ENCODE measurements at regions of chr3 and their contacts with region 1.

Region 1: GRCh38 chr3:139935016-139935865 is at the start of gene CLSTN2:
- DNase-seq: peak; percentile 59
- H3K4me3 ChIP-seq: peak within 1 kb of the TSS; percentile 24 to 37 (median 33)
- H3K27ac ChIP-seq: no peak within 1 kb of the TSS
- H3K4me1 ChIP-seq: peaks cover 15% of the 10 kb centered on the region
- H3K27me3 ChIP-seq: peaks cover 7% of the 10 kb centered on the region
- CTCF ChIP-seq: no peak
- total RNA-seq, gene CLSTN2: 0.16 to 2.0 TPM

Region 2: DNA sequence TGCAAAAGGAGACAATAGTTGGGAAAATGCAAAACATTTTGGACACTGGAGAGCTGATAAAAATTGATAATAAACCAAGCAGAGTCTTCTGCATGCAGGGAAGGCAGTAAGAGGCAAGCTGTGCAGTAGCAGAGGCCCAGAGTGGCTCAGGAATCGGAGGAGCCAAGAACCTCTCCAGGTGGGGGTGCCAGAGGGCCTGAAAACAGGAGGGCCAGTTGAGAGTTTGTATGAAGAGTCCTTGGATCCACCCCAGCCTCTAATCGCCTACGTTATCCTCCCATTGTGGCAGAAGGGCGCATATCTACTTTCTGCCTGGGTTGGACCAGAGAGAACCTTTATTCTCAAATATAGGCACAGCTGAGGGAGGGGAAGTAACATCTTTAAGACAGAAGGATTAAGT is 346.8 kb before region 1 on chr3:
- CTCF ChIA-PET with region 1: no interaction called
- dilution Hi-C with region 1: no loop called
- in situ Hi-C with region 1: loop called in 1 of 2 experiments (anchors 25 kb)
- intact Hi-C with region 1: loop called (anchors 1 kb)
- DNase-seq: peak; percentile 36
- H3K4me3 ChIP-seq: no peak overlapping the region
- H3K27ac ChIP-seq: no peak overlapping the region
- H3K4me1 ChIP-seq: no peaks in the 10 kb centered on the region
- H3K27me3 ChIP-seq: no peaks in the 10 kb centered on the region
- CTCF ChIP-seq: peak; percentile 38 to 66

Region 3: DNA sequence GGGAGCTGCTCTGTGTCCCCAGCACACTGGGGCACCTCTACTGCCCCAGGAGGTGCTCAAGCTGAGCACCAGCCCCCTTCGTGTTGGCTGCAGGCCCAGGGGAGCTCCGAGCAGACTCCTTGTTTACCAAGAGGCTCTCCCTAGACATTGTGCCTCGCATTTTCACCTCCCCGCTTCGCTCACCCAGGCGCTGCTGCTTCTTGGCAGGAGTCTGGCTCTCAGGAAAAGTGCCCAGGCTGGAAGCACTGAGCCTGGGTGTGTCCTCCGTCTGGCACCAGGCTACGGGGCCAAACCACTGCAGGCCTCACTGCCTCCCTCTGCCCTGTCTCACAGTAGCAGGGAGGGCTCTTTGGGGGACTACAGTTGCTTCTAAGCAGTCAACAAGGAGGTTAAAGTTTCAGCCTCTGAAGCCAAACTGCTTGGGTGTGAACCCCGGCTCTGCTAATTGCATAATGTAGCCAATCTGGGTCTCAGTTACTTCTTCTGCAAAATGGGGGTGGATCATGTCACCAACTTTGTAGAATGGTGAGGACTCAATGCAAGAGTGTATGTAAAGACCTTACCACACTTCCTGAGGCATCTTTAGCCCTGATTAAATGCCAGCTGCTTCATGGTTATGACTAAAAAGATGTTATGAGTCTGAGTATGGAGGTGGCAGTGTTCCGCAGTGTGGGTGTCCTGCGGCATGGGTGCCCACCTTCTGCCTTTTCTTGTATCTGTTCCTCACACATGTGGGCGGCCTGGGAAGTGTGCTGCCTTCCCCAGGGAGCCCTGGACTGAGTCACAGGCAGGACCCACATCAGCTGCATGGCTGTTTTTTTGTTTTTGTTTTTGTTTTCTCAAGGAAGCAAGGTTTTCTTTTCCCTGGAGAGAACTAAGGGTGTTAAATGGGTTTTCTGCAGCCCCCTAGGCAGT is 88.6 kb after region 1 on chr3:
- CTCF ChIA-PET with region 1: no interaction called
- dilution Hi-C with region 1: no loop called
- in situ Hi-C with region 1: no loop called
- intact Hi-C with region 1: no loop called
- DNase-seq: no peak
- H3K4me3 ChIP-seq: no peak overlapping the region
- H3K27ac ChIP-seq: no peak overlapping the region
- H3K4me1 ChIP-seq: no peaks in the 10 kb centered on the region
- H3K27me3 ChIP-seq: no peaks in the 10 kb centered on the region
- CTCF ChIP-seq: no peak

Region 4: GRCh38 chr3:140206196-140207048 is 271.2 kb after region 1 on chr3:
- CTCF ChIA-PET with region 1: no interaction called
- dilution Hi-C with region 1: no loop called
- in situ Hi-C with region 1: no loop called
- intact Hi-C with region 1: loop called (anchors 1 kb)
- DNase-seq: peak; percentile 39
- H3K4me3 ChIP-seq: no peak overlapping the region
- H3K27ac ChIP-seq: no peak overlapping the region
- H3K4me1 ChIP-seq: no peaks in the 10 kb centered on the region
- H3K27me3 ChIP-seq: no peaks in the 10 kb centered on the region
- CTCF ChIP-seq: peak; percentile 38 to 64

Region 5: GRCh38 chr3:140499114-140499757 is 564.0 kb after region 1 on chr3:
- CTCF ChIA-PET with region 1: no interaction called
- dilution Hi-C with region 1: no loop called
- in situ Hi-C with region 1: no loop called
- intact Hi-C with region 1: loop called (anchors 1 kb)
- DNase-seq: peak; percentile 26
- H3K4me3 ChIP-seq: no peak overlapping the region
- H3K27ac ChIP-seq: no peak overlapping the region
- H3K4me1 ChIP-seq: no peaks in the 10 kb centered on the region
- H3K27me3 ChIP-seq: no peaks in the 10 kb centered on the region
- CTCF ChIP-seq: peak; percentile 21 to 64

Region 6: DNA sequence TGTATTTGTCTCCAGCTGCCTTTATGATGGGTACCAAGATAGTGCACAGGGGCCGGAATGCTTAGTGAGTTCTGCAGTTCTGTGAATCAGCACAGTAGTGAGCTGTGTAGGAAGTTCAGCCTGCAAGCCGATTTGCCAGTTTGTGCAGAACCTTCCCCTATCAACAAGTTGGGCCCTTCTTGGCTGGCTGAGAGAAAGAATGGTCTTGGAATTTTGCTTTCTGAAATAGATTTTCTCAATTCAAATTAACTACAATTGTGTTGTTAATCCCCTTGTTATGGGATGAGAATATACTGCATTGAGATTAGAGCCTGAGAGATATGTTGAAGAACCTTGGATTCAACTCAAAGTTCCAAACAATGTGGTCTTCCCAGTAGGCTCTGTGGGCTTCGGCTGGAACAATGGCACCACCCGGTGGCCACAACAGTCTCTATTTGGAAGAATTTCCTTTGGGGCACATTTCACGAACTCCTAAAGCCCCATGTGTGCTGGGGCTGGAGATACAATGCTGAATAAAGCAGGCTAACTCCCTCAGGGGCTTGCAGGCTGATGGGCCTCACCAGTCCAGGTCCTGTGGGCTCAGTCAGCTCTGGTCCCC is 801.7 kb after region 1 on chr3:
- CTCF ChIA-PET with region 1: no interaction called
- dilution Hi-C with region 1: no loop called
- in situ Hi-C with region 1: no loop called
- intact Hi-C with region 1: loop called (anchors 5 kb)
- DNase-seq: peak; percentile 36
- H3K4me3 ChIP-seq: no peak overlapping the region
- H3K27ac ChIP-seq: no peak overlapping the region
- H3K4me1 ChIP-seq: no peaks in the 10 kb centered on the region
- H3K27me3 ChIP-seq: peaks cover 13% of the 10 kb centered on the region
- CTCF ChIP-seq: peak; percentile 47 to 64

Measured in mammary epithelial cell (primary cell).